AG04449 (cell line): ENCODE measurements at regions of chr2 and their contacts with region 1.

Region 1: DNA sequence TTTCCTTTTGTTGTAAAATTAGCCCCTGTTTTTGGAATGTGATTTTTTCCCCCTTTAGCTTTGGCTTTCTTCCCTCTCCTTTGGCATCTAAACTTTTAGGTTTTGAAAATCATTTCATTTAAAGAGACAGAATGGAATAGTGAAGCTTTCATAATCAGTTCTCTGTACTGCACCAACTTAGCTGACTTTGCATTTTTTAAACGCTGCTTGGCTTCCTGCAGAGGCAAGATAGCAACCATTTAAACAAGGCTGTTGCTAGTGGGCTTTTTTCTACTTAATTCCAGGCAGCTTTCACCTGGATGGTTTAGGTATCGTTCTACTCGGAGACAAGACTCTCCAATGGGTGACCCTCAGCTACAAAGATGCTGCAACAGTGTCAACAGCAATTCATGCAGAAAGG is 267.9 kb upstream of the PKDCC start:
- DNase-seq: no peak
- H3K4me3 ChIP-seq: no peak overlapping the region
- CTCF ChIP-seq: no peak

Region 2: GRCh38 chr2:41414486-41415230 is 365.2 kb before region 1 on chr2:
- CTCF ChIA-PET with region 1: interaction called, 12 read pairs
- POLR2A ChIA-PET with region 1: no interaction called
- DNase-seq: no peak
- H3K4me3 ChIP-seq: no peak overlapping the region
- CTCF ChIP-seq: peak; percentile 48

Region 3: DNA sequence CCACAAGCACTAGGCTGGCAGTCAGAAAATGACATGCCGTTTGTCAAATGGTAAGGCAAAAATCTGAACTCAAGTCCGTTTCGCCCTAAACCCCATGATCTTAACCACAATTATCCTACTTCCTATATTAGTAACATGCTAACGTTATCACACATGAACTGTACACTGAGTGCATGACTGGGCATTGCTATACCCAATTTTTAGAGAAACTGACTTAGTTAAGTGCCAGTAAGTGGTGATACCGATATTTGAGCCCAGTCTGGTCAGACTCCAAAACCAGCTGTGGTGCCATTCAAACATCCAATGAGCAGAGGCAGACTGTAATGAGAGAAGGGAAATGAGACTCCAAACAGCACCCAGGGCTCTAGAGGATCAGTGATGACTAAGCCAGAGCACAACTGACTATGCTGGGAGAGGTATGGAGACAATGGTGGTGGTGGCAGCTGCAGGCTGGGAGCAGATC is 43.8 kb before region 1 on chr2:
- CTCF ChIA-PET with region 1: no interaction called
- POLR2A ChIA-PET with region 1: no interaction called
- DNase-seq: no peak
- H3K4me3 ChIP-seq: no peak overlapping the region
- CTCF ChIP-seq: no peak